ENCODE measurements at regions of chr11 and their contacts with region 1.

Region 1: DNA sequence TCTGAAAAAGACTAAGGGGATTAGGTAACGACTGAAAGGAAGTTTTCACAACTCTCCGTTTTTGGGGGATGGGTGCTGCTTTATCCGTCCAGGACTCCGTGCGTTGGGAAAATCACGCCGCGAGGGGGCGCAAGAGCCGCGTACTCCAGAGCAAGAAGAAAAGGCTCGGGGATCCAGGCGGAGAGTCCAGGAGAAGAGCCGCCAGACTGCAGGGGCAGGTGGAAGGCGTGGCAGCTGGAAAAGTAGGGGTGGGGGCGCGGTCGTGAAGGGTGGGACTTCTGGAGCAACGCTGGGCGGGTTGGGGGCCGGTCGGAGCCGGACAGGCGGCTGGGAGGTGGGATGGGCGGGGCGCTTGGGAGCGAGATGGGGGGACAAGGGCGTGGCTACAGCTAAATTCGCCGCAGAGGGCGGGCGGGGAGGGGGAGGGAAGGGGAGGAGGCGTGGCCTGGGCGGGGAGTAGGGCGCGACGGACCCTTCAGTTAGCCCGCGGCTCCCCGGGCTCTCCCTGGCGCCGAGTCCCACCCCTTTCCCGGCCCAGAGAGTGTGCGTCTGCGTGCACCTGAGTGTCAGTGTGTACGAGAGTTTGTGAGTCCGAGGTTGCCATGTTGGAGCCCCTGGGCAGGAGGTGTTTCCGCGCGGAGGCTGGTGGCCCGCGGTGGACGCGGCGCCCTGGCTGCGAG is 613 bp upstream of the ARHGEF17 start:
- DNase-seq: peak; percentile 88 to 92
- ATAC-seq: peak; percentile 80 to 82
- H3K4me3 ChIP-seq: peak overlapping the region; percentile 65 to 90 (median 79)
- H3K27ac ChIP-seq: peak overlapping the region; percentile 73 to 83 (median 82)
- H3K4me1 ChIP-seq: peaks cover 4 to 18% of the 10 kb centered on the region in 2 donors
- H3K27me3 ChIP-seq: peaks cover 0 to 2% (median 0%) of the 10 kb centered on the region in 3 donors
- CTCF ChIP-seq: peak; percentile 82 to 93 (median 91)
- POLR2A ChIP-seq: peak; percentile 29 to 39

Region 2: DNA sequence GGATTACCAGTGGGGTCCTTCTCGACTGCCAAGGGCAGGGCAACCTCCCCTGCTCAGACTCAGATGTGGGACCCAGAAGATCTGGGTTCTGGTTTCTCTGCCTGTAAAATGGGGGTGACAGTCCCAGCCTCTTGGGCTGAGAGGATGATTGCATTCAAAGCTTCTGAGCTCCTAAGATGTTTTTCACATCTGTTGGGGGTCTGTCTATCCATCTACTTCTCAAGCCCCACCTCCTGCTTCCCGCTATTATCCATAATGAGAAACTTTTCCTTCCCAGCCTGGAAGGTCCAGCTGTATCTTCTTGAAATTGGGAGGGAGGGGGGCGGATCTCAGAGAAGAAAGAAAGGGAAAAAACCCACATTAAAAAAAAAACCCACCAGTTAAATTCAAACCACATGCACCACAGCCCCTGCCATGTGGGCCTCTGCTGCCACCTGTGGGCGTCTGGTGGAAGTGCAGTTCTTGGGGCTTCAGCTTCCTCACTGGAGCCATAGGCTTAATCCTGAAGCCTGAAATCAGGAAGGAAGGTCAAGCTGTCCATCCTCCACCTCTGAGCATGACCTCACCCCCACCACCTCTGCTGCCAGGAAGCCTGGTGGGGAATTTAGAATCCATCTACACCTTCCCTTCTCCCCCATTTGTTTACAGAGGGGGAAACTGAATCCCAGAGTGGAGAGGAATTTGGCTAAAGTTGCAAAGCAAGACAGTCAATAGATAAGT is 27.9 kb after region 1 on chr11:
- in situ Hi-C with region 1: loop called in 3 of 4 experiments (anchors 5 kb)
- intact Hi-C with region 1: loop called (anchors 1 kb)
- DNase-seq: peak; percentile 47 to 76
- ATAC-seq: peak; percentile 74 to 86
- H3K4me3 ChIP-seq: no peak overlapping the region
- H3K27ac ChIP-seq: peak overlapping the region; percentile 27 to 59 (median 45)
- H3K4me1 ChIP-seq: peaks cover 10 to 12% of the 10 kb centered on the region in 2 donors
- H3K27me3 ChIP-seq: no peaks in the 10 kb centered on the region
- CTCF ChIP-seq: peak; percentile 76 to 100 (median 88)
- POLR2A ChIP-seq: no peak

Region 3: GRCh38 chr11:73393479-73394380 is 86.3 kb after region 1 on chr11:
- in situ Hi-C with region 1: no loop called
- intact Hi-C with region 1: loop called (anchors 2 kb)
- DNase-seq: peak; percentile 44 to 75
- ATAC-seq: peak; percentile 55 to 72
- H3K4me3 ChIP-seq: no peak overlapping the region
- H3K27ac ChIP-seq: peak overlapping the region in 2 of 4 donors; percentile 27 to 53
- H3K4me1 ChIP-seq: peaks cover 30 to 60% of the 10 kb centered on the region in 2 donors
- H3K27me3 ChIP-seq: no peaks in the 10 kb centered on the region
- CTCF ChIP-seq: peak; percentile 77 to 91 (median 88)
- POLR2A ChIP-seq: no peak

Measured in gastrocnemius medialis (tissue), 4 donors.